AG04450 (cell line): ENCODE measurements at regions of chrX and their contacts with region 1.

Region 1: GRCh38 chrX:100649550-100650356 is 5.8 kb downstream of the SRPX2 start:
- DNase-seq: peak; percentile 78
- H3K4me3 ChIP-seq: peak overlapping the region; percentile 10; the same call in 1 of the 2 replicates
- H3K27ac ChIP-seq: peak overlapping the region; percentile 94
- H3K27me3 ChIP-seq: no peaks in the 10 kb centered on the region
- CTCF ChIP-seq: no peak

Region 2: GRCh38 chrX:100636321-100636991 is 13.3 kb before region 1 on chrX and contains the start of gene TSPAN6:
- CTCF ChIA-PET with region 1: interaction called, 47 read pairs
- POLR2A ChIA-PET with region 1: interaction called, 11 read pairs
- DNase-seq: peak; percentile 57
- H3K4me3 ChIP-seq: peak within 1 kb of the TSS; percentile 70
- H3K27ac ChIP-seq: no peak within 1 kb of the TSS
- H3K27me3 ChIP-seq: no peaks in the 10 kb centered on the region
- CTCF ChIP-seq: peak; percentile 60
- polyA plus RNA-seq, gene TSPAN6: 38.4 and 49.1 TPM in 2 replicates

Region 3: DNA sequence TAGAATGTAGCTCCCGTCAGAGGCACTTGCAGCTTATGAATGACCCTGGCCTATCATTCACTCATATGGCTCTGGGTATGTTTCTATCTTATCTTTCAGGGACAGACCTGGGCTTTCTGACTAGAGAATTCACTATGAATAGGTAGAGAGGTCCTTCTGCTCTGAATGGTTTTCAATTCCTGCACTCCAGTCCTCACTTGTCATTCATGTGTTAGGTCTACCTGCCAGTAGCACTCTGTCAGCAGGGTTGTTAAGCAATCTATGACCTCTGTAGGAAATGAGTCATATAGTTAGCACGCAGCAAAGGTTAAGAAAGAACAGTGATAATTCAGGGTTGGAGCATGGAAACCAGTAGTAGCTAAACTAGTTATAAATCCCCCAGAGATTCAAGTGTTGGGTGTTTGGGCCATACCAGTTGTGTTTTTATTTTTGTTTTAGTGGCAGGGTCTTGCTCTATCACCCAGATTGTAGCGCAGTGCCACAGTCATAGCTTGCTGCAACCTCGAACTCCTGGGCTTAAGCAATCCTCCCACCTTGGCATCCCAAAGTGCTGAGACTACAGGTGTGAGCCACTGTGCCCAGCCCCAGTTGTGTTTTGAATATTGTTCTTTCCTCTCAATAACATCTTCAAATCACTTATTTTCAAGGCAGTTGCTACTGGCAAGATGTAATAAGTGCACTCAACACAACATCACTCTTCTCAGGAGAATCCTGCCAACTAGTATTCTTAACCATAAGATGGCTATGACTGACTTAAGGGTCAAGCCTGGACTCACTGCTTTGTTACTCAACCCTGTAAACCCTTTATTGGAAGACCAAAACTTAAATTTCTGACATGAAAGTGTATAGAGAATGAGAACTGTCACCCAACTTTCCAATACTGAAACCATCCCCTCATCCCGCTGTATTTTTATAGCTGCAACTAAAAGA is 344.9 kb after region 1 on chrX:
- CTCF ChIA-PET with region 1: no interaction called
- POLR2A ChIA-PET with region 1: no interaction called
- DNase-seq: no peak
- H3K4me3 ChIP-seq: no peak overlapping the region
- H3K27ac ChIP-seq: peak overlapping the region; percentile 77
- H3K27me3 ChIP-seq: no peaks in the 10 kb centered on the region
- CTCF ChIP-seq: no peak

Region 4: GRCh38 chrX:101530944-101531343 is 881.2 kb after region 1 on chrX:
- CTCF ChIA-PET with region 1: no interaction called
- POLR2A ChIA-PET with region 1: no interaction called
- DNase-seq: no peak
- H3K4me3 ChIP-seq: no peak overlapping the region
- H3K27ac ChIP-seq: no peak overlapping the region
- H3K27me3 ChIP-seq: no peaks in the 10 kb centered on the region
- CTCF ChIP-seq: no peak